Gastrocnemius medialis (tissue), 4 donors: ENCODE measurements at regions of chr4 and their contacts with region 1.

Region 1: GRCh38 chr4:155809835-155810234 is 51.0 kb downstream of the GUCY1B1 start:
- DNase-seq: no peak
- ATAC-seq: peak in 1 of 2 donors; percentile 62
- H3K4me3 ChIP-seq: no peak overlapping the region
- H3K27ac ChIP-seq: no peak overlapping the region
- H3K4me1 ChIP-seq: peaks cover 0 to 3% of the 10 kb centered on the region in 2 donors
- H3K27me3 ChIP-seq: no peaks in the 10 kb centered on the region
- CTCF ChIP-seq: peak in 3 of 5 experiments; percentile 32 to 63 (median 59)
- POLR2A ChIP-seq: no peak

Region 2: DNA sequence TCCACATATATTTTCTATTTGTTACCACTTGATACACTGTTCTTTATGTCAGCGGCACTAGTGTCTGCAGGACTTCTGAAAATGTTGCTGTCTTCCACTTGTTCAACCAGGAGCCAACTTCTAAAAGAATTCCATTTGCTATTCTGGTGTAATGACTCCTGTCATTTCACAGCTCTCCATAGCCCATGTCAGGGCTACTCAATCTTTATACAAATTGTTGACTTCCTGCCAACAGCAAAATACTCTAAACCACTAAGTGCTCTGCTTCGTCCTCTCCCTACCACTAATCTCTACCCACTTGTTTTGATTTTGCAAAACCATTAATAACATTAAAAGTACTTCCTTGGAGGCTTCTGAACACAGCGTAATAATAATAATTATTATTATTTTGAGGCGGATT is 136.7 kb after region 1 on chr4:
- in situ Hi-C with region 1: loop called in 2 of 4 experiments (anchors 5 to 10 kb)
- intact Hi-C with region 1: no loop called
- DNase-seq: no peak
- ATAC-seq: no peak
- H3K4me3 ChIP-seq: no peak overlapping the region
- H3K27ac ChIP-seq: no peak overlapping the region
- H3K4me1 ChIP-seq: no peaks in the 10 kb centered on the region
- H3K27me3 ChIP-seq: no peaks in the 10 kb centered on the region
- CTCF ChIP-seq: no peak
- POLR2A ChIP-seq: no peak

Region 3: GRCh38 chr4:155953151-155954114 is 143.6 kb after region 1 on chr4 and contains the start of gene CTSO:
- in situ Hi-C with region 1: loop called in 2 of 4 experiments (anchors 5 to 10 kb)
- intact Hi-C with region 1: no loop called
- DNase-seq: peak; percentile 23 to 37
- ATAC-seq: peak; percentile 83 to 89
- H3K4me3 ChIP-seq: peak within 1 kb of the TSS; percentile 57 to 86 (median 78)
- H3K27ac ChIP-seq: peak within 1 kb of the TSS; percentile 73 to 88 (median 82)
- H3K4me1 ChIP-seq: no peaks in the 10 kb centered on the region
- H3K27me3 ChIP-seq: no peaks in the 10 kb centered on the region
- CTCF ChIP-seq: peak; percentile 28 to 61 (median 36)
- POLR2A ChIP-seq: peak; percentile 13 to 37
- total RNA-seq, gene CTSO: 2.9 to 6.4 (median 3.9) TPM

Region 4: GRCh38 chr4:156568041-156568440 is 758.2 kb after region 1 on chr4:
- in situ Hi-C with region 1: no loop called
- intact Hi-C with region 1: no loop called
- DNase-seq: no peak
- ATAC-seq: no peak
- H3K4me3 ChIP-seq: no peak overlapping the region
- H3K27ac ChIP-seq: no peak overlapping the region
- H3K4me1 ChIP-seq: no peaks in the 10 kb centered on the region
- H3K27me3 ChIP-seq: no peaks in the 10 kb centered on the region
- CTCF ChIP-seq: no peak
- POLR2A ChIP-seq: no peak